ENCODE measurements at regions of chr20 and their contacts with region 1.

Region 1: DNA sequence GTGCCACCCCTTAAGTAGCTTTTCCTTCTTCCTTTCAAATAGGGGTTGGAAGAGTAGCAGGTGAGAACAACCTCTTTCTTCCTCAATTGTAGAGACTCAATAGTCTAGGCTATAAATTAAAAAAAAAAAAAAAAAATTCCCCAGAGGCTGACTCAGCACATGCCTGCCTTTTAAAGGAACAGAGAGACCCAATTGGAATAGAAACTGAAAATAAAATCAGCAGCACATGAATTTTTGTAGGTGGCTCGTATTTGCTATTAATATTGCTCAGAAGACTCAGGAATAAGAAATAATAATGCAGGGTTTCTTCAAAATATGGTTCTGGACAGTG is 19.3 kb downstream of the TOP1 start:
- DNase-seq: no peak
- ATAC-seq: peak; percentile 55
- H3K4me3 Mint-ChIP-seq: peak overlapping the region; percentile 77
- H3K27ac Mint-ChIP-seq: peak overlapping the region; percentile 89
- H3K4me1 Mint-ChIP-seq: peaks cover 87% of the 10 kb centered on the region
- H3K27me3 Mint-ChIP-seq: no peaks in the 10 kb centered on the region

Region 2: GRCh38 chr20:40806929-40807820 is 240.8 kb before region 1 on chr20:
- CTCF ChIA-PET with region 1: no interaction called
- POLR2A ChIA-PET with region 1: no interaction called
- DNase-seq: no peak
- ATAC-seq: no peak
- H3K4me3 Mint-ChIP-seq: no peak overlapping the region
- H3K27ac Mint-ChIP-seq: no peak overlapping the region
- H3K4me1 Mint-ChIP-seq: no peaks in the 10 kb centered on the region
- H3K27me3 Mint-ChIP-seq: peaks cover 20% of the 10 kb centered on the region

Region 3: GRCh38 chr20:41028348-41029148 is 19.4 kb before region 1 on chr20 and contains the start of gene TOP1:
- CTCF ChIA-PET with region 1: interaction called, 31 read pairs
- POLR2A ChIA-PET with region 1: interaction called, 3 read pairs
- DNase-seq: peak; percentile 100
- ATAC-seq: peak; percentile 97
- H3K4me3 Mint-ChIP-seq: peak within 1 kb of the TSS; percentile 92
- H3K27ac Mint-ChIP-seq: peak within 1 kb of the TSS; percentile 94
- H3K4me1 Mint-ChIP-seq: peaks cover 54% of the 10 kb centered on the region
- H3K27me3 Mint-ChIP-seq: peaks cover 3% of the 10 kb centered on the region
- total RNA-seq, gene TOP1: 89.1 to 91.5 TPM

Region 4: DNA sequence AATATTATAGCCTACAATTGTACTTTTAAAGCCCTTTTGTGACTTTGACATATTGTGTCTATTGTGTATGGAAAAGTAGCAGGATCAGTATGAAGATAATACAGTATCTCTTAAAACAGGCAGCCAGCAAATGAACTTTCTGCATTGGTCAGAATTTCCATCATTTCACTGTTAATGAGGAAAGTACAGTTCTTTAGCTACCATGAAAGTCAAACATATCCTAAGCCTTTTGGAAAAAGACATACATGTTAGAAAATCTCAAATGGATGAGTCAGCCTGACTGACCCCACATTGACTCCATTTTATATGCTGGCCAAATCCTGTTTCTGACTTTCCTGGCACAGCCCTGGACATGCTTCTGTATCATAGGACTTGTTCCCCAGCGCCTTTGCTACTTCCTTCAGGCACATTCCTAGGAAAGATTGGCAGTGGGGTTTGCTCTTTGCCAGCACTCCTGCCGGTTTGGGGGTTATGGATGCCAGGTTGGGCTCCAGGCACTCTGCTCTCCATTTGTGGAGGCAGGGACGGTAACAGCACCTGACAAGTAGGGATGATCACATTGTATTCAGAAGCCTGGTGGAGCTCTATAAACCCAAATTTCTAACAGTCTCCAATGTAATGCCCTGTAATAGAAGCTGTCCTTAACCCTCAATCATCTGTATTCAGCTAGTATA is 24.4 kb after region 1 on chr20:
- CTCF ChIA-PET with region 1: interaction called, 11 read pairs
- POLR2A ChIA-PET with region 1: interaction called, 3 read pairs
- DNase-seq: no peak
- ATAC-seq: no peak
- H3K4me3 Mint-ChIP-seq: no peak overlapping the region
- H3K27ac Mint-ChIP-seq: peak overlapping the region; percentile 53
- H3K4me1 Mint-ChIP-seq: peaks cover 76% of the 10 kb centered on the region
- H3K27me3 Mint-ChIP-seq: no peaks in the 10 kb centered on the region

Region 5: GRCh38 chr20:41078329-41078728 is 30.4 kb after region 1 on chr20:
- CTCF ChIA-PET with region 1: interaction called, 13 read pairs
- POLR2A ChIA-PET with region 1: interaction called, 3 read pairs
- DNase-seq: peak; percentile 26
- ATAC-seq: peak; percentile 36
- H3K4me3 Mint-ChIP-seq: peak overlapping the region; percentile 36
- H3K27ac Mint-ChIP-seq: peak overlapping the region; percentile 27
- H3K4me1 Mint-ChIP-seq: peaks cover 77% of the 10 kb centered on the region
- H3K27me3 Mint-ChIP-seq: no peaks in the 10 kb centered on the region

Measured in activated CD8-positive, alpha-beta T cell treated with anti-CD3 and anti-CD28 coated beads, Interleukin-2, amount 10 ng/mL, durations not matched to agents 7 days and 5 days (primary cell).